OCI-LY7 (cell line): ENCODE measurements at regions of chr17 and their contacts with region 1.

Region 1: DNA sequence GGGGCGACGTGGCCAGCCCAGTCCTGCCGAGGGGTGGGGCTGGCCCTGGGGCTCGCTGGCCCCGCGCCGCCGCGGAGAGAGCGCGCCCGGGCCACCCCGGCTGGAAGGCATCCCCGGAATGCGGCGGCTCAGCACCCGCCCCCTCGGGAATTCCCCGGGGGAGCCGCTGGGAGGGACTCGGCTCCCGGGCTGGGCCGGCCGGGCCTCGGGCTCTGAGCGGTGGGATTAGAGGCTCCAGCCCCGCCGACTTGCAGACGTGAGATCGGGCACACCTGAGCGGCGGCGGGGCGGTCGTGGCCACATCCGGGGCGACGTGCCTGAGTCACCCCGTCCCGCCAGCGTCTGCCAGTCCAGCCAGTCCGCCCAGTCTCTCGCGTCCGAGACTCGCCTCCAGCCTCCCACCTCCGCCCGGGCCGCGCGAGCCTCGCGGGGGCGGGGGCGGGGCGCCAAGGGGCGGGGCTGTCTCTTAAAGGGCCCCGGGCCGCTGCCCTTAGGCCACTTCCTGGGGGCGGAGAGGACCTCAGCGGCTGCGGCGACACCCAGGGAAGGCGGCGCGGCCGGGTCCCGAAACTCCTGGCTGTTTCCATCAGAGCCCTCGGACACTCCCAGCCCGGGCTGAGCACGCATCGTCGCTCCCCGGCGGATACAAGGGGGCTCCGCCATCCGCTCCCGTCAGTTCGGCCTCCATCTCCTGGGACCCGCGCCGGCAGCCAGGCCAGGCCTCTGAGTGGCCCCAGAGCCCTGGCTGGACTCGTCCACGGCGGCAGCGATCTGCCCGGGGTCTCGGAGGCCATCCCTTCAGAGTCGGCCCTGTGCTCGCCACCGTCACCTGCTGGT is at the start of gene KCTD11:
- DNase-seq: peak; percentile 80
- H3K4me3 ChIP-seq: peak within 1 kb of the TSS; percentile 75
- H3K27ac ChIP-seq: peak within 1 kb of the TSS; percentile 55
- H3K4me1 ChIP-seq: peaks cover 36% of the 10 kb centered on the region
- CTCF ChIP-seq: no peak
- total RNA-seq, gene KCTD11: 4.1 and 6.0 TPM in 2 replicates

Region 2: DNA sequence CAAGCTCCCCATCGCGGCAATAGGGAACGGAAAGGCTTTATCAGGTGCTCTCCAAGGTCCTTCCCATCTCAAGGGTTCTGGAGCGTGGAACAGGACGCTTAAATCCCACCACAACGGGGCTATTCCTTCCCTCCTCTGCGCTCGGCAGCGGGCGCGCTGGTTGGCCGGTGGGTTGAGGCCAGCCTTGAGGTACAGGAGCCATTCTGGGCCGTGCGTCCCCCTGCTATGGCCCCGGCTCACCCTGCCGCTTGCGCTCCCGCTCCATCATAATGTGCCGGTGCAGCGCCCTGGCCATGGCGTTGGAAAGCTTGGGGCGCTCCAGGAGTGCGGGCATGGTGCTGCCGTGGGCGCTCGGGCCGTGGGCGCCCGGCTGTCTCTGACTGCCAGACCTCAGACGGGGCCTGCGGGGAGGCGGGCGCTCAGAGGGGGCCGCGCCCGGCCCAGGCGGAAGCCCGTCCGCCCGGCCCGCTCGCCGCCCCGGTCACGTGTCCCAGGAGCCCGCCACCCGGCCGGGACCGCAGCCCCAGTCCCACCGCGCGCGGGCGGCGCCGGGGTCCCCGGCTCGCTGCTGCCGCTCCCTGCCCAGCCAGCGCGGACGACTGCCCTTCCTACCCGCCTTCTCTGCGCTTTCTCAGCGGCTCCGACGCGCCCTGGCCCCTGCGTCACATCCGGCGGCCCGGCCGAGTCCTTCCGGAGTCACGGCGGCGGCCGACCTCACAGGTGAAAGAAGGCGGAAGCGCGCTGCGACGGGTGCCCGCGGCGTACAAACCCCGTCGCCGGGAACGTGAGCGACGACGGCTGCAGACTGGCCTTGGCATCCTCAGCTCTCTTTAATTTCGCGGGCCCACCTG is 36.9 kb before region 1 on chr17 and contains the start of gene GPS2:
- CTCF ChIA-PET with region 1: no interaction called
- POLR2A ChIA-PET with region 1: no interaction called
- intact Hi-C with region 1: loop called (anchors 5 kb)
- DNase-seq: peak; percentile 91
- H3K4me3 ChIP-seq: peak within 1 kb of the TSS; percentile 95
- H3K27ac ChIP-seq: peak within 1 kb of the TSS; percentile 79
- H3K4me1 ChIP-seq: peaks cover 47% of the 10 kb centered on the region
- CTCF ChIP-seq: no peak
- total RNA-seq, gene GPS2: 70.4 and 70.5 TPM in 2 replicates

Region 3: DNA sequence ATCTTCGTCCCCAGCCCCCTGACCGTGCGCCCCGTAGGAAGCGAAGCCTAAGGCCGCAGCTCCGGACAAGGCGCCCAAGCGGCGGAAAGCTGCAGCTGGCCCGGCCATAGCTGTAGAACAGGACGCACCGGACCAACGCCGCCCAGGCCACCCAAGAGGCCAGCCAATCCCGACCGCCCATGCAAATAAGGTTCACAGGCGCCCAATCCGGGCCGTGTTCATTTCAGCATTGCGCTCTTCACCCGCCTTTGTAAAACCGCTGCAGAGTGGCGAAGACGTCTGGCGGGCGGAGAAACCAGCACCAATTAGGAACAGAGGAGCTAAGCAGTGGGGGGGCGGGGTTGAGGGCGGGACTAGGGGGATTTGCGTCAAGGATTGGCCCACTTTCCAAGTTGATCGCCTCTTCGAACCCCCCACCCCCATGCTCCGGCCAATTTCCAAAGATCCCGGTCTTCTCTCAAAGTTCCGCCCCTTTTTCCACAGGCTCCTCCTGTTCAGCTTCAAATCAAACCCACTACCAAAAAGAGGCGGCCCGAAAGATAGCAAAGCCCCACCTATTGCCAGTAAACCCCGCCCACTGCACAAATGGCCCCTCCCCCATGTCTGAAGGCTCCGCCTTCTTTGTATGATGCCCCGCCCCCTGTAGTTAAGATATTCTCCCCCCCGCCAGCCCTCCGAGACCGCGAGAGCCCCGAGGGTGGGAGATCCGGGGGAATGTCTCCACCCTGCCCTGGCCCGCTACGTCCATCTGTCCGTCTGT is 52.3 kb after region 1 on chr17 and contains the start of gene TMEM256:
- CTCF ChIA-PET with region 1: no interaction called
- POLR2A ChIA-PET with region 1: no interaction called
- intact Hi-C with region 1: loop called (anchors 5 kb)
- DNase-seq: peak; percentile 98
- H3K4me3 ChIP-seq: peak within 1 kb of the TSS; percentile 70
- H3K27ac ChIP-seq: no peak within 1 kb of the TSS
- H3K4me1 ChIP-seq: peaks cover 6% of the 10 kb centered on the region
- CTCF ChIP-seq: no peak
- total RNA-seq, gene TMEM256: 108 and 165 TPM in 2 replicates

Region 4: DNA sequence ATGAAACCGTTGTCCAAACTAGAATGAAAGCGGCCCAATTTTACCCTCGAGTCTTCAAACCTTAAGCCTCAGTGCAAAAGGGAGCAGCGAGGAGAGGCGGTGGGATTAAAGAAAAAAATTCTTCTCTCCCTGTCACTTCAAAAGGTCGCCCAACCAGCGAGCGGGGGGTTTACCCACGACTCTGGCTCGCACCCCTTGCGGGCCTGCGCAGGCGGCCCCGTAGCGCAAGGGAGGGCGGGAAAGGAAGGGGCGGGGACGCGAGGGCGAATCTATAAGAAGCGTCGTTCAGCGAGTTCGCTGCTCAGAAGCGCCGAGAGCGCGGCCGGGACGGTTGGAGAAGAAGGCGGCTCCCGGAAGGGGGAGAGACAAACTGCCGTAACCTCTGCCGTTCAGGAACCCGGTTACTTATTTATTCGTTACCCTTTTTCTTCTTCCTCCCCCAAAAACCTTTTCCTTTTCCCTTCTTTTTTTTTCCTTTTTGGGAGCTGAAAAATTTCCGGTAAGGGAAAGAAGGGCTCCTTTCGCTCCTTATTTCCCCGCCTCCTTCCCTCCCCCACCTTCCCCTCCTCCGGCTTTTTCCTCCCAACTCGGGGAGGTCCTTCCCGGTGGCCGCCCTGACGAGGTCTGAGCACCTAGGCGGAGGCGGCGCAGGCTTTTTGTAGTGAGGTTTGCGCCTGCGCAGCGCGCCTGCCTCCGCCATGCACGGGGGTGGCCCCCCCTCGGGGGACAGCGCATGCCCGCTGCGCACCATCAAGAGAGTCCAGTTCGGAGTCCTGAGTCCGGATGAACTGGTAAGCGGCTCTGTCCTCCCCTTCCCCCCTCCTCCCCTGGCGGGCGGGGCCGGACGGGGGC is 132.4 kb after region 1 on chr17 and contains the start of gene POLR2A:
- CTCF ChIA-PET with region 1: no interaction called
- POLR2A ChIA-PET with region 1: no interaction called
- intact Hi-C with region 1: loop called (anchors 1 kb)
- DNase-seq: peak; percentile 98
- H3K4me3 ChIP-seq: peak within 1 kb of the TSS; percentile 89
- H3K27ac ChIP-seq: peak within 1 kb of the TSS; percentile 90
- H3K4me1 ChIP-seq: peaks cover 38% of the 10 kb centered on the region
- CTCF ChIP-seq: no peak
- total RNA-seq, gene POLR2A: 76.6 and 84.2 TPM in 2 replicates